GM10248 (cell line): ENCODE measurements at regions of chr2 and their contacts with region 1.

Region 1: GRCh38 chr2:113198790-113199612 is 25.2 kb downstream of the PSD4 start:
- DNase-seq: peak; percentile 91
- CTCF ChIP-seq: peak; percentile 71

Region 2: DNA sequence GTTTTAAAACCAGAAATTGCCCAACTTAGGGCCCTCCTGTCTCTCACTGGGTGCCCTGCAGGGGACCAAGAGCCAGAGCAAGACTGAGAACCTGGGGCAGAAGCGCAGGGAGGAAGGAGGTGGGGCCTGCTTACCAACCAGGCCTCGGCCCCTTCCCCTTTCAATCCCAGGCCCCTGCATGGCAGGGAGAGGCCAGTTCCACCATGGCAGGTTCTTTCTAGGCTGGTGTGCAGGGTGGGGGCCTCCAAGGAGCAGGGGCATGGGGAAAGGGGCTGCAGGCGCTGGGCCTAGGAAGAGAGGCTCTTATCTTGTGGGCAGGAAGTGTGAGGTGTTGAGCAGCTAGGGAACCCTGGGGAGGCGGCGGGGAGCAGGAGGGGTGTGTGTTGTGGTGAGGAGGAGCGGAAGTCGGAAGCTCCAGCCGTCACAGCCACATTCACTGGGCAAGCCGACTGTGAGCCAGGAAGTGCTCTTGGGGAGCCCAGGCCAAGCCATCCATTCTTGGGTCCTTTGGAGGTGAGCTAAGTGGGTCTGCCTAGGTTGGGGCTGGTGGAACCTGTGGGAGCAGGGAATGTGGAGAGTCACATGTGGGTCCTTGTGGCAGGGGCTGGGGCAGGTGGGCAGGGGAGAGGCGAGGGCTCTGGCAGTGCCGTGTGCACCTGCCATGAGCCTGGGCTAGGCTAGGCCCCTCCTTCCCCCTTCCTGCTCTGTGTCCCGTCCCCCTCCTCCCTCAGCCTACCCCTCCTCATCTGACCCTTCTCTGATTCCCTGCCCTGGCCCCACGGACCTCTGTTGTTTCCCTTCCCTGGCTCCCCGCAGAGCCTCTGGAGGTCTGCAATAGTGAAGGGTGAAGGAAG is 25.2 kb before region 1 on chr2 and contains the start of gene PSD4:
- CTCF ChIA-PET with region 1: interaction called, 44 read pairs
- POLR2A ChIA-PET with region 1: interaction called, 3 read pairs
- DNase-seq: peak; percentile 90
- CTCF ChIP-seq: no peak

Region 3: GRCh38 chr2:113181258-113182051 is 17.5 kb before region 1 on chr2:
- CTCF ChIA-PET with region 1: interaction called, 44 read pairs
- POLR2A ChIA-PET with region 1: no interaction called
- DNase-seq: no peak
- CTCF ChIP-seq: no peak

Region 4: GRCh38 chr2:114160263-114160981 is 961.4 kb after region 1 on chr2:
- CTCF ChIA-PET with region 1: no interaction called
- POLR2A ChIA-PET with region 1: no interaction called
- DNase-seq: no peak
- CTCF ChIP-seq: no peak